ENCODE measurements at regions of chr10 and their contacts with region 1.

Region 1: GRCh38 chr10:95693668-95694534 is at the start of gene TCTN3:
- DNase-seq: peak; percentile 96 to 98 (median 98)
- ATAC-seq: peak; percentile 98 to 100 (median 99)
- H3K4me3 ChIP-seq: peak within 1 kb of the TSS; percentile 64 to 92 (median 80)
- H3K27ac ChIP-seq: peak within 1 kb of the TSS; percentile 20 to 73 (median 70)
- H3K4me1 ChIP-seq: peaks cover 0 to 7% (median 2%) of the 10 kb centered on the region in 4 donors
- H3K27me3 ChIP-seq: no peaks in the 10 kb centered on the region
- CTCF ChIP-seq: peak; percentile 99 to 100 (median 100)
- POLR2A ChIP-seq: peak; percentile 63
- total RNA-seq, gene TCTN3: 15.5 to 24.3 (median 19.1) TPM

Region 2: DNA sequence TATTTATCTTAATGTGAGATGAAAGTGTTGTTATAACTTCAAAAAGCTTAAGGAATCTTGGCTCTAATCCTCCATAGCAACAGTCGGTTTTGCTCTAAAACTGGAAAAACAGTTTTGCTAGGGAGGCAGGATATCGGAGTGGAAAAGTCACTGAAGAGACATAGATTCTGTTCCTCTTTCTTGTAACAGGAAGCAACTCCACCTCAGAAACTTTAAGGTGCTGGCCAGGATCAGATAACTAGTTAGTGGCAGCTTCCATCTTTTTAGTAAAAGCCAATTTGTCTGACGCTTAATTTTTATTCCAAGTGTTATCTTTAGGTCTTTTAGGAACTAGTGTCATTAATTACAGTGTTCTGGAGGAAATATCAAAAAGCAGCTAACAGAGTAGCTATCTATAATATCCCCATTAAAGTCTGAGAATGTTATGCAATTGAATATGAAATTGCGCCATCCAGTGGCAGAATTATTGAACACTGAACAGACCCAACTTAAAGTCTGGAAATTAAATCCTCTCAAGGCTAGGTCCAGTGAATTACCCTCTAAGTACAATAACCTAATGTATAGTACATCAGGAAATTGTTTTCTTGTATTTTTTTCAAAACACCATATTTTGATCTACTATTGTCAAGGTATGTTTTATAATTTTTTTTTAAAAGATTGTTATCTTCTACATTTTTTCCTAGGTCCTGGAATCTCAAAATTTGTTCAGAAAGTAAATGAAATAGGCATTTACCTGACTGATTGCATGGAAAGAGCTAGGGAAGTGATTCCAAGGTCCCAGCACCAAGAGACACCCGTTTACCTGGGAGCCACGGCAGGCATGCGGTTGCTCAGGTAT is 148.0 kb after region 1 on chr10:
- intact Hi-C with region 1: loop called (anchors 10 kb)
- DNase-seq: no peak
- ATAC-seq: peak; percentile 74 to 84 (median 78)
- H3K4me3 ChIP-seq: no peak overlapping the region
- H3K27ac ChIP-seq: no peak overlapping the region
- H3K4me1 ChIP-seq: no peaks in the 10 kb centered on the region
- H3K27me3 ChIP-seq: no peaks in the 10 kb centered on the region
- CTCF ChIP-seq: peak; percentile 57 to 75 (median 68)
- POLR2A ChIP-seq: no peak

Measured in right lobe of liver (tissue), 6 donors.